ENCODE measurements at regions of chr17 and their contacts with region 1.

Region 1: DNA sequence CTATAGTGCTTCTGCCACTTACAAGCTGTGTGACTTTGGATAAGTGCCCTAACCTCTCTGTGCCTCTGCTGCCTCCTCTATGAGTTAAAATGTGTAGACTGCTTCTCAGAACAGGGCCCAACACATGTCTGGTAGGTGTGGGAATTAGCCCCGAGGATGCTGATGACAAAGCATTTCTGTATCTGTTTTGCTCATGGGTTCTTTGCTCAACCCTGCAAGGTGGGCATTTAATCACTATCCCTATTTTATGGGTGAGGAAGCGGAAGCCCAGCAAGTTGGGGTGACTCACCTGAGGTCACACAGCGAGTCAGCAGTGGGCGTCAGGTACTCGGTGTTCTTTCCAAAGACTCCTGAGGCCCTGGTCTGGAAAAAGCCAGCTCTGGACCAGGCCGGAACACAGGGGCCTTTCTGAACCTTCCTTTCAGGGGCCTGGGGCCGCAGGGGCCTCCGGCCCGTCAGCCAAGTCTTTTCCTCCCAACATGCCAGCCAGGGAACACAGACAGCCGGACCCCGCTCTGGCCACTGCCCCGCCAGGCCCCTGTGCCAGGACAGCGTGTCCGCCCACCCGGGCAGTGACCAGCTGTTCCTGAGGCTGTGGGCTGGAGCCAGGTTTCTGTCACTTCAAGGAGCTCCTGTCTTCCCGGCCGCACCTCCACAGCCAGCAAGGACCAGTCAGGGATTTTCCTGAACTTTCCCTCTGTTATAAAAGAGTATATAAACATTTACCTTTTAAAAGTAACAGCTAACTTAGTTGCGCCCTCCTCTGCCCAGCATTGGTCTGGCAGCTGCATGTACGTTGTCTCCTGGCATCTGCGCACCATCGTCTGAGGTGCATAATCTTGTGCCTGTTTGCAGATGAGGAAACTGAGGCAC is 62.5 kb downstream of the SREBF1 start:
- DNase-seq: peak in 1 of 2 donors; percentile 62
- ATAC-seq: no peak
- H3K4me3 ChIP-seq: no peak overlapping the region
- H3K27ac ChIP-seq: peak overlapping the region in 1 of 2 donors; percentile 28
- H3K4me1 ChIP-seq: no peaks in the 10 kb centered on the region
- H3K27me3 ChIP-seq: no peaks in the 10 kb centered on the region

Region 2: DNA sequence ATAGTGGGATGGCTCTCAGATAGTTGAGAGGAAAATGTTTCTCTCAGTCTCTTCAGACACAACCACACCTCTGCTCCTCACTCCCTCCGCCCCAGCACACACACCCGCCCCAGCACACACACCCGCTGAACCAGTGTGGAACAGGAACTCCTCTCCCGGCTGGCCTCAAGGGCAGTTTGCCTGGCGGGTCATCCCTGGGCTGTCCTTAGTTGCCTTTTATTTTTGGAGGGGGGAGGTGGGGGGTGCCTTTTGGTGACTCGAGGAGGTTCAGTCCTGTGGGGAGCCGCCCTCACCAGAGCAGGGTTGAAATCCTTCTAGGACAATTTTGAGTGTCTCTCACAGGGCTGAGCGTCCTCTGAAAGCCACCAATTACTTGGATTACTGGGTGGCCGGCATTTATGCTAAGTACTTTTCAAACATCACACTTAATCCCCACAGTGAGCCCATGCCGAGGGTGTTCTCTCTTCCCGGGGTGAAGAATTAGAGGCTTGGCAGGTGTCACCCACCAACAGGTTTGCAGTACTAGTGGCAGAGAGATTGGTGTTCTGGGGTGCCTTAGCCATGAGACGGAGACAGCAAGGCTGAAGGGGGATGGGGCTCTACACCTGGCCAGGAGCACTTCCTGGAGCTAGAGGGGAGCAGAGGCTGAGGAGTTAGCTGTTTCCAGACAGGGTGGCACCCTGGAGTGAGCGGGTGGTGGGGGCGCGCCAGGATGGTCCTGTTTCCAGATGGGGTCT is 280.8 kb before region 1 on chr17:
- intact Hi-C with region 1: no loop called
- DNase-seq: peak in 1 of 2 donors; percentile 78
- ATAC-seq: no peak
- H3K4me3 ChIP-seq: no peak overlapping the region
- H3K27ac ChIP-seq: no peak overlapping the region
- H3K4me1 ChIP-seq: no peaks in the 10 kb centered on the region
- H3K27me3 ChIP-seq: no peaks in the 10 kb centered on the region

Region 3: DNA sequence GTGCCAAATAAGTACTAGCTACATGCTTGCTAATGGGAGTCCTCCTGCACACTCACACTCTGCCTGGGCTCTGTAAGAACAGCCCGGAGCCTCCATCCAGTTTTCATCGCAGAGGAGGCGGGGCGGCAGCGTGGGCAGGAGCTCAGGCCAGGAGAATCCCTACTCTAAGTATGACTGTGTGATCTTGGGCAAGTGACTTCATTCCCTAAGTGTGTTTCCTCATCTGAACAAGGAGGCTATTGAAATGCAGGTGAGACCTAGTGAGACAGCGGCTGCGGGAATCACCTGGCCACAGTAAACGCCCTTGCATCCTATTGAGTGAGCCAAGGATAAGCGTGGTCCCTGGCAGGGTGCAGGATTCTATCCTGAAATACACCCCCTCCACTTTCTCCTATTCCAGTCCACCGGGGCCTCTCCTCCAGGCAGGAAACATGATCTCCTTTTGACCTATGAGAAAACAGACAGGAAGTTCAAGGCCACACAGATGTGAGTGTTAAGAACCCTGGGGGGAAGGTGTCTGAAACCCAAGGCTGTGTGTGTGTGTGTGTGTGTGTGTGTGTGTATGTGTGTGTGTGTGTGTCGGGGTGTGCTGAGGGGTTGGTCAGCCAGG is 98.2 kb before region 1 on chr17:
- intact Hi-C with region 1: loop called (anchors 1 to 5 kb)
- DNase-seq: no peak
- ATAC-seq: no peak
- H3K4me3 ChIP-seq: no peak overlapping the region
- H3K27ac ChIP-seq: no peak overlapping the region
- H3K4me1 ChIP-seq: no peaks in the 10 kb centered on the region
- H3K27me3 ChIP-seq: no peaks in the 10 kb centered on the region